Aorta (tissue), 5 donors: ENCODE measurements at regions of chr9 and their contacts with region 1.

Region 1: GRCh38 chr9:15510789-15511575 is at the start of gene PSIP1:
- DNase-seq: peak; percentile 83 to 90
- ATAC-seq: peak; percentile 94
- H3K4me3 ChIP-seq: peak within 1 kb of the TSS; percentile 86 to 87
- H3K27ac ChIP-seq: peak within 1 kb of the TSS in 1 of 2 donors; percentile 56
- H3K4me1 ChIP-seq: peaks cover 0 to 4% of the 10 kb centered on the region in 2 donors
- H3K27me3 ChIP-seq: no peaks in the 10 kb centered on the region
- total RNA-seq, gene PSIP1: 60.0 to 89.0 TPM

Region 2: GRCh38 chr9:14170973-14171596 is 1339.9 kb before region 1 on chr9:
- intact Hi-C with region 1: no loop called
- DNase-seq: no peak
- ATAC-seq: no peak
- H3K4me3 ChIP-seq: no peak overlapping the region
- H3K27ac ChIP-seq: no peak overlapping the region
- H3K4me1 ChIP-seq: peaks cover 2 to 3% of the 10 kb centered on the region in 2 donors
- H3K27me3 ChIP-seq: no peaks in the 10 kb centered on the region

Region 3: GRCh38 chr9:15430920-15431844 is 79.8 kb before region 1 on chr9:
- intact Hi-C with region 1: no loop called
- DNase-seq: no peak
- ATAC-seq: no peak
- H3K4me3 ChIP-seq: no peak overlapping the region
- H3K27ac ChIP-seq: no peak overlapping the region
- H3K4me1 ChIP-seq: no peaks in the 10 kb centered on the region
- H3K27me3 ChIP-seq: no peaks in the 10 kb centered on the region

Region 4: DNA sequence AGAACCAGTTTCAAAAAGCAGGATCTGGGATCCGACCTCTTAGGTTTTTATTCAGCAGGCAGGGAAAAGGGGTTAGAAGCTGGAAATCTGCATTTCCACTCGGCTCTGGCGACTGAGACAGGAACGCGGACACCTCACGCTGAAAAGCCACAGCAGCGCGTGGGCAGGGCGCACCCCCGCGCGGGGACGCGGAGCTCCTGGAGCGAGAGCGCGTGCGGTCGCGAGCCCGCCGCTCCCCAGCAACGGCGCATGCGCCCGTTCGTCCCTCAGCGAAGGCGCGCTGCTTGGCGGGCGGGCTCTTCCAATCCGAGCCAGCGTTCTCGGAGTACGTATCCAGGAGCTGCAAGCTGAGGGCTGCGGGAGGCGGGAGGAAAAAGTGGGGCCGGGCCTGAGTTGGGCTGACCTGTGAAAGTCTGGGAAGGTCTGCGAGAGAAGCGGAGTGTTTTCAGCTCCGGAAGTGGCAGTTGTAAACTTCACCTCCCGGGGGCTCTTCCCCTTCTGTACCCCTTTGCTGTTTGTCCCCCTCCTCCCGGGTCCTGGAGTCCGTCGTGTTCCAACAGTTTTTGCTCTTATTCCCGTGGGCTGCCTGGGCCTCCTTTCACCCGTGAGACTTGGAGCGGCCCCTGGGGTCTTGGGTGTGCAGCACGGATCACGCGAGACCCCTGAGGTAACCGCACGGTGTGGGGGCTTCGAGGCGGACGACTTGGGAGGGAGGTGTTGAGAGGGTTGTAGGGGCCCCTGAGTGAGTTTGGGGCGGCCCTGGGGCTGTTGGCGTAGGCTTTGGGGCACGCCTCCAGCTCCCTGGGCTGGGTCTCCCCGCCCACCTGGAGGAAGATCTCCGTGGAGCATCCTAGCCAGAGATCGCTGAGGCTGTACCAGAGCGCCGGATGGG is 41.9 kb after region 1 on chr9 and contains the start of gene CCDC171:
- intact Hi-C with region 1: loop called (anchors 2 to 5 kb)
- DNase-seq: peak; percentile 96 to 97
- ATAC-seq: peak; percentile 99
- H3K4me3 ChIP-seq: peak within 1 kb of the TSS; percentile 66 to 88
- H3K27ac ChIP-seq: peak within 1 kb of the TSS in 1 of 2 donors; percentile 35
- H3K4me1 ChIP-seq: no peaks in the 10 kb centered on the region
- H3K27me3 ChIP-seq: no peaks in the 10 kb centered on the region
- total RNA-seq, gene CCDC171: 5.2 to 5.4 TPM